ENCODE measurements at regions of chr21 and their contacts with region 1.

Region 1: GRCh38 chr21:34603002-34603709 is 11.8 kb downstream of the RCAN1 start:
- DNase-seq: peak; percentile 49
- H3K27ac ChIP-seq: no peak overlapping the region
- CTCF ChIP-seq: peak; percentile 70

Region 2: DNA sequence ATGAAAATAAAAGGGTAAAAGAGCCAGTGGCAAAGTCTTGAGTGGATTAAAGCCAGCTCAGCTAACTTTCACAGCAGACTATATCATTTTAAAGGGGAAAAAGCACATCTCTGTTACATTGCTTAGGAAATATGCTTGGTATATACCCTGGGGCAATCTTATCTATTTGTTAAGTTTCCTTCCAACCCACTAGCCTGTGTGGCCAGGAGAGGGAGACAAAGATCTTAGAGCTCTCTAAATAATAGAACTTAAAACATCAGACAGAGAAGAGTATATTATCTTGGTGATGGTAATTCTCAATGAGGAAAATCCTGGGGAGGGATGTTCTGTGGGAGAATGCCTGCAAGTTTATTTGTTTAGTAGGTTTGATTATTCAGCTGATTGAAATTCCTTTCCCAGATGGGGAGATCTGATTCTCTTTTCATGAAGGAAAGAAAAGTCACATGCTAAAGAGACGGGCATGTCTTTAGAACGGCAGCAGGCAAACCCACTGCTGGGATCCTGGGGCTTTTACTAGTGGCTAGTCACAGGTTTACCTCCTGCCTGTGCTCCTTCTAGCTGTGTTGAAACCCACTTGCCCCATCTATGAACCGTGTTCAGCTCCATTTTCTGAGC is 235.7 kb before region 1 on chr21:
- CTCF ChIA-PET with region 1: interaction called, 10 read pairs
- POLR2A ChIA-PET with region 1: no interaction called
- DNase-seq: peak; percentile 72
- H3K27ac ChIP-seq: no peak overlapping the region
- CTCF ChIP-seq: peak; percentile 85

Region 3: GRCh38 chr21:34510148-34511142 is 92.7 kb before region 1 on chr21:
- CTCF ChIA-PET with region 1: interaction called, 12 read pairs
- POLR2A ChIA-PET with region 1: no interaction called
- DNase-seq: no peak
- H3K27ac ChIP-seq: 0 out of 2 replicates have a peak overlapping the region, but pooled peaks have one; percentile 27
- CTCF ChIP-seq: no peak

Measured in RWPE1 (cell line).